ENCODE measurements at regions of chr9 and their contacts with region 1.

Region 1: DNA sequence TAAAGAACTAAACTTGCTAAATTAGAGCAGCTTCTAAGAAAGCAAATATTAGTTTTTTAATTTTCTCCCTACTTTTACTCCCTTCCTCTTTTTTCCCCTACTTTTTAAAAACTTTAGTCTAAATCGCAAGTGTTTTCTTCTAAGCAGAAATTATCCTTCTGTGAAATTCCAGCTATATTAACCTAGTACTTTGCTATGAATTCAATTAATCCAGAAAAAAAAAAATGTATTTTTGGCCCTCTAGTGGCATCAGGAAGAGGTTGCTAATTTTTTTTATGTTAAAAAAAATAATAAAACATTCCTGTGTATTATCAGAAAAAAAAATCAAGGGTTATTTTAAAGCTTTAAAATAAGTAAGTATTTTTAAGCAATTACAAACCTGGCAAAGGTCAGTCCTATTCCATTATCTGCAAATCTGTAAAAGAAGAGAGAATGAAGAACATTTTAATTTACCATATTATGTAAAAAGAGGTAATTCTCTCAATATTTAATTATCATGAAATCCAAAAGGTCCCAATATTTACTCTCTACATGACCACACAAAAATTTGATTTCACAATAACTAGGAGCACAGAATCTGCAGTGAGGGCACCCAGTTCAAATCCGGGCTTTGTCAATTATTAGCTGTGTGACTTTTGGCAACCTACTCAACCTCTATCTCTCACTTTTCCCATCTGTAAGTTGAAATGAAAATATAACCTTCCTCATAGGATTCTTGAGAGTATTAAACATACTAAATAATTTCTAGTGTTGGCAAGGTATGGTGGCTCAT is 52.0 kb downstream of the CEMIP2 start:
- DNase-seq: peak in 2 of 5 donors; percentile 17 to 24
- H3K4me3 ChIP-seq: no peak overlapping the region
- H3K4me3 Mint-ChIP-seq: no peak overlapping the region
- H3K27ac ChIP-seq: no peak overlapping the region
- H3K27ac Mint-ChIP-seq: peak overlapping the region in 4 of 7 donors; percentile 29 to 75 (median 74)
- H3K4me1 ChIP-seq: no peaks in the 10 kb centered on the region
- H3K4me1 Mint-ChIP-seq: peaks cover 0 to 15% (median 9%) of the 10 kb centered on the region in 4 donors
- H3K27me3 ChIP-seq: no peaks in the 10 kb centered on the region
- H3K27me3 Mint-ChIP-seq: no peaks in the 10 kb centered on the region

Region 2: DNA sequence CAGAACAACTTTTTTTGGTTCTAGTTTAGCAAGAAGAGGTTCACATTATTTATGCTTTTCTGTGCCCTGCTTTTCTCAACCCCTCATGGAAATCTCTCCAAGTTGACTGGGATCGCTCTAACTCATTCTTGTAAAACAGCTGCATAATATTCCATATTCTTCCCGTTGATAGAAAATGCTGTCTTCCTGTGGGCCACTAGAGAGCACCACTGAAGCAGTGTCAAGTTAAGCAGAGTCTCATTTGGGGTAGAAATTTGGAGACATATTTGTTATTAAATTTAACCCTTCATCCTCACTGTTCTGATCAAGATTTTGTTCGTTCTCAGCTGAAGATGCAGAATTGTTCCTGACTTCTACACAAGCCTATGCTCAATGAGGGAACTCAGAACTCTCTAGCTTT is 88.1 kb before region 1 on chr9:
- CTCF ChIA-PET with region 1: interaction called, 29 read pairs
- POLR2A ChIA-PET with region 1: no interaction called
- intact Hi-C with region 1: no loop called
- DNase-seq: peak in 4 of 5 donors; percentile 22 to 34 (median 25)
- H3K4me3 ChIP-seq: no peak overlapping the region
- H3K4me3 Mint-ChIP-seq: no peak overlapping the region
- H3K27ac ChIP-seq: no peak overlapping the region
- H3K27ac Mint-ChIP-seq: no peak overlapping the region
- H3K4me1 ChIP-seq: no peaks in the 10 kb centered on the region
- H3K4me1 Mint-ChIP-seq: peaks cover 0 to 2% (median 0%) of the 10 kb centered on the region in 4 donors
- H3K27me3 ChIP-seq: no peaks in the 10 kb centered on the region
- H3K27me3 Mint-ChIP-seq: no peaks in the 10 kb centered on the region

Region 3: GRCh38 chr9:71638627-71639026 is 77.7 kb before region 1 on chr9:
- CTCF ChIA-PET with region 1: interaction called, 10 read pairs
- POLR2A ChIA-PET with region 1: no interaction called
- intact Hi-C with region 1: no loop called
- DNase-seq: peak; percentile 30 to 55 (median 42)
- H3K4me3 ChIP-seq: peak overlapping the region in 1 of 2 donors; percentile 36
- H3K4me3 Mint-ChIP-seq: peak overlapping the region; percentile 56 to 87 (median 86)
- H3K27ac ChIP-seq: no peak overlapping the region
- H3K27ac Mint-ChIP-seq: peak overlapping the region in 5 of 7 donors; percentile 78 to 96 (median 91)
- H3K4me1 ChIP-seq: peaks cover 20% of the 10 kb centered on the region
- H3K4me1 Mint-ChIP-seq: peaks cover 23 to 32% (median 25%) of the 10 kb centered on the region in 4 donors
- H3K27me3 ChIP-seq: no peaks in the 10 kb centered on the region
- H3K27me3 Mint-ChIP-seq: no peaks in the 10 kb centered on the region

Region 4: GRCh38 chr9:71683598-71684235 is 32.6 kb before region 1 on chr9:
- CTCF ChIA-PET with region 1: interaction called, 16 read pairs
- POLR2A ChIA-PET with region 1: interaction called, 3 read pairs
- intact Hi-C with region 1: no loop called
- DNase-seq: no peak
- H3K4me3 ChIP-seq: no peak overlapping the region
- H3K4me3 Mint-ChIP-seq: peak overlapping the region; percentile 31 to 79 (median 69)
- H3K27ac ChIP-seq: no peak overlapping the region
- H3K27ac Mint-ChIP-seq: peak overlapping the region; percentile 8 to 90 (median 72)
- H3K4me1 ChIP-seq: peaks cover 37% of the 10 kb centered on the region
- H3K4me1 Mint-ChIP-seq: peaks cover 36 to 59% (median 48%) of the 10 kb centered on the region in 4 donors
- H3K27me3 ChIP-seq: no peaks in the 10 kb centered on the region
- H3K27me3 Mint-ChIP-seq: no peaks in the 10 kb centered on the region

Measured in CD4-positive, alpha-beta memory T cell (primary cell).